MCF 10A (cell line): ENCODE measurements at regions of chr2 and their contacts with region 1.

Region 1: GRCh38 chr2:200713003-200713703 is 98.6 kb upstream of the BZW1 start:
- DNase-seq: peak; percentile 88
- H3K4me3 Mint-ChIP-seq: peak overlapping the region; percentile 66
- H3K27ac Mint-ChIP-seq: peak overlapping the region; percentile 76
- H3K4me1 Mint-ChIP-seq: peaks cover 11% of the 10 kb centered on the region
- H3K27me3 Mint-ChIP-seq: peaks cover under 1% of the 10 kb centered on the region
- CTCF ChIP-seq: peak; percentile 94

Region 2: GRCh38 chr2:200728630-200729029 is 15.5 kb after region 1 on chr2:
- CTCF ChIA-PET with region 1: interaction called, 86 read pairs
- POLR2A ChIA-PET with region 1: interaction called, 7 read pairs
- intact Hi-C with region 1: no loop called
- DNase-seq: peak; percentile 96
- H3K4me3 Mint-ChIP-seq: no peak overlapping the region
- H3K27ac Mint-ChIP-seq: no peak overlapping the region
- H3K4me1 Mint-ChIP-seq: peaks cover 9% of the 10 kb centered on the region
- H3K27me3 Mint-ChIP-seq: peaks cover 18% of the 10 kb centered on the region
- CTCF ChIP-seq: no peak

Region 3: DNA sequence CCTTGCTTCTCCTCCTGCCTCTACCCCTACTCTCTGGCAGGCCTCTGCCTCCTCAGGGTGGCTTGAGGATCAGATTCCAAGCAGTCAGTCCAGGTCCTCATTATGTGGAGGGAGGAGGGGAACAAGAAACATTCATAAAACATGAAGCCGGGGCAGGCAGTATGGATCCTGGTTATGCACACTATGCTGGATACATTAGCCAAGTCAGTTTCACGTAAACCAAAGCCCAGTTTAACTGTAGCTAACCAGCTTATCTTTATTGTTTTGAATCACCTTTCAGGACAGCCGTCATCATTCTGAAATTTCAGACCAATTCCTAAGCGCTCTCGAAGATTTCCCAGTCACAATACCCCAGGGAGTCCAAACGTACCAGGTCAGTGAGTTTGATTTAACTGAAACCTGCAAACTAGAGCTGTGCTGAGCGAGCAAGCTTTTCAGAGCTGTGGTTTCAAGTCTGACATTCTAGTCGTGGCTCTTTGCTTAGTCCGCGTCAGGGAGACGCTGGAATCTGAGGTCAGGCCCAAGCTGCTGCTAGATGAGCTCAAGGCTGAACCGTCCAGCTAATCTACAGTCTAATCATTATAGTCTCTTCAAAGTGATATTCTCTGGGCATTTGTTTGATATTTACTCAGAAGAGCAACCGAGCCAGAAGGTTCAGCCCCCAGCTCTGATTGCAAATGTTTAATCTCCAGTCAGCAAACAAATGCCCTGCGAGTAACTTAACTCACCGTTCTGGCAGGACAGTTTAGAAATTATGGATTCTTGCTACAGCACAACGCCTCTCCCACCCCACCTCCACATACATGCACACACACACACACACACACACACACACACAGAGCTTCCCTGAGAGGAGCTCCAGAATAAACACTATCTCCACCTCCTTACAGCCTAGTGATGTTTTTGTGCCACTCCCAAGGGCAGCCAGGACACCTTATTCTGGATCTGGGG is 34.8 kb after region 1 on chr2:
- CTCF ChIA-PET with region 1: interaction called, 15 read pairs
- POLR2A ChIA-PET with region 1: no interaction called
- intact Hi-C with region 1: no loop called
- DNase-seq: no peak
- H3K4me3 Mint-ChIP-seq: no peak overlapping the region
- H3K27ac Mint-ChIP-seq: no peak overlapping the region
- H3K4me1 Mint-ChIP-seq: no peaks in the 10 kb centered on the region
- H3K27me3 Mint-ChIP-seq: no peaks in the 10 kb centered on the region
- CTCF ChIP-seq: no peak

Region 4: GRCh38 chr2:200765139-200765951 is 52.2 kb after region 1 on chr2:
- CTCF ChIA-PET with region 1: interaction called, 8 read pairs
- POLR2A ChIA-PET with region 1: interaction called, 9 read pairs
- intact Hi-C with region 1: loop called (anchors 1 kb)
- DNase-seq: peak; percentile 96
- H3K4me3 Mint-ChIP-seq: peak overlapping the region; percentile 11
- H3K27ac Mint-ChIP-seq: peak overlapping the region; percentile 79
- H3K4me1 Mint-ChIP-seq: peaks cover 49% of the 10 kb centered on the region
- H3K27me3 Mint-ChIP-seq: no peaks in the 10 kb centered on the region
- CTCF ChIP-seq: no peak

Region 5: GRCh38 chr2:200795044-200795443 is 81.9 kb after region 1 on chr2:
- CTCF ChIA-PET with region 1: interaction called, 13 read pairs
- POLR2A ChIA-PET with region 1: interaction called, 4 read pairs
- intact Hi-C with region 1: no loop called
- DNase-seq: peak; percentile 77
- H3K4me3 Mint-ChIP-seq: no peak overlapping the region
- H3K27ac Mint-ChIP-seq: no peak overlapping the region
- H3K4me1 Mint-ChIP-seq: peaks cover 22% of the 10 kb centered on the region
- H3K27me3 Mint-ChIP-seq: no peaks in the 10 kb centered on the region
- CTCF ChIP-seq: no peak

Region 6: GRCh38 chr2:200864176-200864976 is 151.2 kb after region 1 on chr2 and contains the start of gene CLK1:
- CTCF ChIA-PET with region 1: interaction called, 5 read pairs
- POLR2A ChIA-PET with region 1: interaction called, 22 read pairs
- intact Hi-C with region 1: loop called (anchors 1 kb)
- DNase-seq: peak; percentile 91
- H3K4me3 Mint-ChIP-seq: peak within 1 kb of the TSS; percentile 86
- H3K27ac Mint-ChIP-seq: peak within 1 kb of the TSS; percentile 99
- H3K4me1 Mint-ChIP-seq: peaks cover 16% of the 10 kb centered on the region
- H3K27me3 Mint-ChIP-seq: no peaks in the 10 kb centered on the region
- CTCF ChIP-seq: no peak
- total RNA-seq, gene CLK1: 102 and 118 TPM in 2 replicates

Region 7: DNA sequence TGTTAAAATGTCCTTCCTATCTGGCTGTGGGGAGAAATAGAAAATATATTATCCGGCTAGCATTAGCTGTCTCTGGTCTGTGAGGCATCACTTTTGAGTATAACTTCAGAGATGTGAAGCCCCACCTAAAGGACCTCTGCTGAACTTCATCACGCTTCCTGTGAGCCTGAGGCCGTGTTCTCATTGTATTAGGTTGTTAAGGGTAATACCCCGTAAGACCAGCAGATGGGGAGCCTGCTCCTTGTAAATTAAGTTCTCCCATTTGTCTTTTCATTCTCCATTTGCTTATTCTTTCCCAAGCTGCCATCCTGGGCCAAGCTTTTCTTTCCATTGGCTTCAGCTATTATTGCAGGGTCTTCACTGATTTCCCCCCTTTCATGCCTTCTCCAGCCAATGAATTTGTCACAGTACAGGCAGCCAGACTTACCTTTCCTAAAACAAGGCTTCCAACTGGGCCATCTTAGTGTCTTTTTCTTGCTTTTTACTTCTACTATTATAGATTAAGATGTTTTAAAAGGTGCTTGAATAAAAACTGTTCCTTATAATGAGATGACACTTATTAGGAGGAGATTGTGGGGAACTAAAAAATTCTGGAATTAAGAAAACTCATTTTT is 188.4 kb after region 1 on chr2:
- CTCF ChIA-PET with region 1: interaction called, 5 read pairs
- POLR2A ChIA-PET with region 1: no interaction called
- intact Hi-C with region 1: loop called (anchors 1 kb)
- DNase-seq: peak; percentile 90
- H3K4me3 Mint-ChIP-seq: no peak overlapping the region
- H3K27ac Mint-ChIP-seq: no peak overlapping the region
- H3K4me1 Mint-ChIP-seq: no peaks in the 10 kb centered on the region
- H3K27me3 Mint-ChIP-seq: no peaks in the 10 kb centered on the region
- CTCF ChIP-seq: peak; percentile 88

Region 8: DNA sequence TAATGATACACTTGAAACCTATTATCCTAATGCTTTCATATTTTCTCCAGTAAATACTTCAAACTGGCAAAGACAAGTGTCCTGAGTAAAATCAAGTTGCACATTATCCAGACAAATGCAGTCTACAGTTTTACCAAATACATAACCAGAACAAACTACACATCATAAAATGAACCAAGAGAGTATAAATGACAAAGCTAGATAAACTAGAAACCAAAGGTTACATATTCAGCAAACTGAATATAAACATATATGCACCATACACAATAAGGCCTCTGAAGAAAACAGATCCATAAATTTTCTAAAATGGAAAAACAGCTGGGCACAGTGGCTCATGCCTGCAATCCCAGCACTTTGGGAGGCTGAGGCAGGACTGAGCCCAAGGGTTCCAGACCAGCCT is 311.4 kb after region 1 on chr2:
- CTCF ChIA-PET with region 1: no interaction called
- POLR2A ChIA-PET with region 1: no interaction called
- intact Hi-C with region 1: no loop called
- DNase-seq: no peak
- H3K4me3 Mint-ChIP-seq: no peak overlapping the region
- H3K27ac Mint-ChIP-seq: no peak overlapping the region
- H3K4me1 Mint-ChIP-seq: no peaks in the 10 kb centered on the region
- H3K27me3 Mint-ChIP-seq: no peaks in the 10 kb centered on the region
- CTCF ChIP-seq: no peak